PC-9 (cell line): ENCODE measurements at regions of chr19 and their contacts with region 1.

Region 1: GRCh38 chr19:1734321-1734966 is 18.9 kb upstream of the ONECUT3 start:
- DNase-seq: no peak
- H3K4me3 ChIP-seq: no peak overlapping the region
- H3K27ac ChIP-seq: no peak overlapping the region
- H3K4me1 ChIP-seq: no peaks in the 10 kb centered on the region
- H3K27me3 ChIP-seq: no peaks in the 10 kb centered on the region
- CTCF ChIP-seq: no peak

Region 2: DNA sequence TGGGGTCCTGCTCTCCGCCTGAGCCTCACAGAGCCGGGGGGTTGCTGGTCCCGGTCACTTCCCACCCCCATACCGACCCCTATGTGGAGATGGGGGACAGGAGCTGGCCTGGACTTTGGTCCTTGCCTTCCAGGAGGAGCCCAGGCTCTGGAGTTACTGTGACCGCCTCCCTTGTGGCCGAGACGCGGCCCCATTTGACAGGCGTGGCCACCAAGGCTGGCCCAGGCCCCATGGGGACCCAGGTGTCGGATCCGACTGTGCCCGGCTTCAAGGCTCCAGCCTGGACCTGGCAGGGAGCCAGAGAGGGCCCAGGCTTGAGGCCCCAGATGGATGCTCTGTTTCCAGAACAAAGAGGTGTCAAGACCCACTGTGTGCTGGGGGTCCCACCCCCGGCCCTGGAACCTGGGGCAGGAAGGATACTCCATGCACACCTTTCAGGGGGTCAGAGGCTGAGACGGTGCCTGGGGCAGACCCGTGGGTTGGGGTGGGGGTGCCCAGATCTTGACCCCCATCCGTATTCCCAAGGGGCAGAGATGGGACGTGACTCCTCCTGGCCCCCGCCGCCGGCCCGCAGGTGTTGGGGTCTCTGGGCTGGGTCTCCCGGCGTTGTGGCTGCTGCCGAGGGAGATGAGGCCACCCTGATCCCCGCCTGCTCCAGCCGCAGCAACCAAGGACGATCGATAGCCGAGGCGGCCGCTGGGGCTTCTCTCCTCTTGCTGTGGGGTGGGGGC is 34.3 kb before region 1 on chr19:
- CTCF ChIA-PET with region 1: interaction called, 10 read pairs
- POLR2A ChIA-PET with region 1: no interaction called
- intact Hi-C with region 1: no loop called
- DNase-seq: no peak
- H3K4me3 ChIP-seq: no peak overlapping the region
- H3K27ac ChIP-seq: no peak overlapping the region
- H3K4me1 ChIP-seq: no peaks in the 10 kb centered on the region
- H3K27me3 ChIP-seq: peaks cover 17% of the 10 kb centered on the region; the same call in 1 of the 2 replicates
- CTCF ChIP-seq: no peak

Region 3: GRCh38 chr19:1773173-1773572 is 38.7 kb after region 1 on chr19:
- CTCF ChIA-PET with region 1: no interaction called
- POLR2A ChIA-PET with region 1: interaction called, 10 read pairs
- intact Hi-C with region 1: no loop called
- DNase-seq: peak; percentile 37 to 83
- H3K4me3 ChIP-seq: no peak overlapping the region
- H3K27ac ChIP-seq: peak overlapping the region; percentile 9; the same call in 1 of the 2 replicates
- H3K4me1 ChIP-seq: no peaks in the 10 kb centered on the region
- H3K27me3 ChIP-seq: no peaks in the 10 kb centered on the region
- CTCF ChIP-seq: no peak